Gastrocnemius medialis (tissue), 4 donors: ENCODE measurements at regions of chr16 and their contacts with region 1.

Region 1: DNA sequence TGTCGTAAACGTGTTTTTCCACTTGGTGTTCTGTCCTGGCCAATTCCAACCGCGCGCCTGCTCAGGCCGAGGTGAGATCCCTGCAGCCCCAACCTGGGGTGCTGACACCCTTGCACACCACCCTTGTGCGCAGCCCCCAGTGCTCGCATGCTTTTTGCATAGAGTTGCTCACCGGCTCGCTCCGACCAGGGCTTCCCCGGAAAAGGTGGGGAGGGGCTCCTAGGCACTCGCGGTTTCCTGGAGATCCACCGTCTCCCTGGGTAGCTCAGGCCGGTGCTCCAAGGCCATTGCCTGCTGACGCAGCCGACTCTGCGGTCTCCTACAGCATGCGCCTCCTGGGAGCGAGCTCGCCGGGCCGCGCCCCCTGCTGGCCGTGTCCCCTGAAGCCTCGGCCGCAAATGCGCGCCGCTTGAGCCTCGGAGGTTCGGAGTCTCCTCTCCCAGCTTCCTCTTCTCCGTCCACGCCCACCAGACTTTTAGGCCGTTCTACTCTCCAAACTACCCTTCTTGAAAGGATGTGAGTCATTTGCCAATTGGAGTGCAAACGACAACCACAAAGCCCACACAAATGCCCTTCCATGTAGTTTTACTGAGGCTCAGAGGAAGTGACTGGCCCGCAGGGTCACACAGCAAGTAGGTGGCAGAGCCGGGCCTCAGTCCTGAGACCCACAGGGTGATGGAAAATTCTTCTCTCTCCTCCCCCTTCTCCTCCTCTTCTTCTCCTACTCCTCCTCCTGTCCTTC is 7.2 kb upstream of the PDP2 start:
- DNase-seq: peak; percentile 70 to 80
- ATAC-seq: peak; percentile 85 to 91
- H3K4me3 ChIP-seq: peak overlapping the region; percentile 30 to 55 (median 40)
- H3K27ac ChIP-seq: peak overlapping the region in 2 of 4 donors; percentile 35 to 57
- H3K4me1 ChIP-seq: peaks cover 0 to 6% of the 10 kb centered on the region in 2 donors
- H3K27me3 ChIP-seq: no peaks in the 10 kb centered on the region
- CTCF ChIP-seq: peak; percentile 62 to 94 (median 90)
- POLR2A ChIP-seq: no peak

Region 2: GRCh38 chr16:66406534-66407221 is 466.4 kb before region 1 on chr16:
- in situ Hi-C with region 1: loop called (anchors 10 to 25 kb)
- intact Hi-C with region 1: loop called (anchors 5 kb)
- DNase-seq: peak; percentile 54 to 67
- ATAC-seq: peak; percentile 86
- H3K4me3 ChIP-seq: peak overlapping the region; percentile 50 to 62 (median 53)
- H3K27ac ChIP-seq: peak overlapping the region in 1 of 4 donors; percentile 7
- H3K4me1 ChIP-seq: peaks cover 3 to 6% of the 10 kb centered on the region in 2 donors
- H3K27me3 ChIP-seq: no peaks in the 10 kb centered on the region
- CTCF ChIP-seq: peak; percentile 80 to 94 (median 89)
- POLR2A ChIP-seq: no peak

Region 3: DNA sequence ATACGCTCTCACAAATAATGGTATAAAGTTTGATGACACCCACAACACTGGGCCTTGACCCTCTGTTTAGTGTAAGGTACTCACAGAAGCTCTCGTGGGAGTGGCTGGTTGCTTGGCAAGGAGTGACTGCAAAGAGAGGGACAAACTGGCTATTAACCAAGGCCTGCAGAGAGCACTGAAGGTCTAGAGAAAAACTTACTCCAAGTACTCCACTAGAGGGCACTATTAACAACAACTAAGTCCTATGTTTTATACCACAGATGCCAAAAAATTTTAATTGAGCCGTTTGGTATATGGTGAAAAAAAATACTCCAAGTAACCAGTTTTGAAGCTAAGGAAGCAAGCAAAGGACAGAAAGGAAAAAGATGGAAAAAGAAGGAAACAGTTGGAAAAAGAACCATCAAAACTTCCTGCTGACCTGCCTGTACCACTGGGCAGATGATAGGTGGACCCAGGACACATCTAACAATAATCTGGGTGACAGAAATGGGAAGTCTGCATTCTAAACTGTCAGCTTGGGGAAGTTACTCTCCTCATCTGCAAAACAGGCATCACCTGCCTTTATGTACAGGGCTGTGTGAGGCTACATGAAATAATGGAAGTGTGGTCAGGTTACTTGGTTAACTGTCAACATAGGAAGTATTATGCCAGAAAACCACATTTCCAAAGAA is 144.9 kb before region 1 on chr16:
- in situ Hi-C with region 1: loop called in 1 of 4 experiments (anchors 5 kb)
- intact Hi-C with region 1: no loop called
- DNase-seq: peak in 1 of 2 donors; percentile 25
- ATAC-seq: peak; percentile 85 to 92
- H3K4me3 ChIP-seq: no peak overlapping the region
- H3K27ac ChIP-seq: no peak overlapping the region
- H3K4me1 ChIP-seq: peaks cover 7% of the 10 kb centered on the region in 2 donors
- H3K27me3 ChIP-seq: no peaks in the 10 kb centered on the region
- CTCF ChIP-seq: peak; percentile 60 to 73 (median 65)
- POLR2A ChIP-seq: no peak

Region 4: GRCh38 chr16:66830422-66831404 is 42.4 kb before region 1 on chr16 and contains the start of gene NAE1:
- in situ Hi-C with region 1: loop called in 2 of 4 experiments (anchors 5 kb)
- intact Hi-C with region 1: no loop called
- DNase-seq: peak; percentile 65 to 76
- ATAC-seq: peak; percentile 94 to 95
- H3K4me3 ChIP-seq: peak within 1 kb of the TSS; percentile 69 to 96 (median 86)
- H3K27ac ChIP-seq: peak within 1 kb of the TSS; percentile 65 to 92 (median 89)
- H3K4me1 ChIP-seq: peaks cover 9 to 11% of the 10 kb centered on the region in 2 donors
- H3K27me3 ChIP-seq: no peaks in the 10 kb centered on the region
- CTCF ChIP-seq: peak; percentile 91 to 98 (median 97)
- POLR2A ChIP-seq: peak; percentile 87 to 88
- total RNA-seq, gene NAE1: 29.1 to 57.0 (median 34.8) TPM